ENCODE measurements at regions of chr12 and their contacts with region 1.

Region 1: GRCh38 chr12:96587691-96588090 is 98.3 kb downstream of the CFAP54 start:
- DNase-seq: no peak
- ATAC-seq: no peak

Region 2: DNA sequence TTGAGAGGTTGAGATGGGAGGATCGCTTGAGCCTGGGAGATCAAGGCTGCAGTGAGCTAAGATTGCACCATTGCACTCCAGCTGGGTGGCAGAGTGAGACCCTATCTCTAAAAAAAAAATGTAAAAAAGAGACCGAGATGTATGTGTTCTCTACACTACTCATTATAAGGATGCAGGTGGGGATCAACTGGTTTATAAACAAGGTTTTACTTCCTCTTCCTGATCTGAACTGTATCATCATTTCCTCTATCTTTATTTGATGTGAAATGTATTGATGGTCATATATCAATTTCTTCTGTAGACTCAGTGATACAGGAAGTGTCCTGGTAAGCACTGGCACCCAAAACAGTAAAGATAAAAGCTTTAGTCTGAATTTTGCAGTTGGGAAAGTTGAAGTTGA is 1016.3 kb before region 1 on chr12:
- intact Hi-C with region 1: no loop called
- DNase-seq: no peak
- ATAC-seq: no peak

Region 3: DNA sequence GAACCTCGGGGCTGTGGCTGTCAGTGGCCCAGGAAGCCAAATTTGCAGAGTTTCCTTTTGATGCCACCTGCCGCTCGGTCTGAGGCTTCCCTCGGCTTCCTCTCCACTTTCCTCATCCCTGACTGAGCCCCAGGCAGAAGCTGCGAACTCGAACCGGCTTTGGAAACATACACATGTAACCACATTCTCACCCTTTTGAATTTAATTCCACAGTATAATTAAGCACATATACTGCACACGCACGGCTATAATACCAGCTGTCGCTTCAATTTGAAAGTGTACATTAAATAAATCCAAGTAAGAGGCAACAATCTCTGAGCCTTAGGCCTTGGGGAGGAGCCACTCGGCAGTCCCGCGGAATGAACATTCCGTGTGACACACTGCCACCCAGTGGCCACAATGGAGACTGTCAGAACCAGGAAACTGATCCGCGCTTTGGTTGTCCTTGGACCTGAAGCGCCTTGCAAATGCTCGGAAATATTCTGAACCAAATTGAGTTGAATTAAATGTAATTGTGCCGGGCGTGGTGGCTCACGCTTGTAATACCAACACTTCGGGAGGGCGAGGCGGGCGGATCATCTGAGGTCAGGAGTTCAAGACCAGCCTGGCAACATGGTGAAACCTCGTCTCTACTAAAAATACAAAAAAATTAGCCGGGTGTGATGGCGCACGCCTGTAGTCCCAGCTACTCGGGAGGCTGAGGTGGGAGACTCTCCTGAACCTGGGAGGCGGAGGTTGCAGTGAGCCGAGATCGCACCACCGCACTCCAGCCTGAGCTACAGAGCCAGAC is 1809.8 kb after region 1 on chr12:
- intact Hi-C with region 1: loop called (anchors 10 kb)
- DNase-seq: peak; percentile 81
- ATAC-seq: peak; percentile 99